AG04449 (cell line): ENCODE measurements at regions of chr1 and their contacts with region 1.

Region 1: DNA sequence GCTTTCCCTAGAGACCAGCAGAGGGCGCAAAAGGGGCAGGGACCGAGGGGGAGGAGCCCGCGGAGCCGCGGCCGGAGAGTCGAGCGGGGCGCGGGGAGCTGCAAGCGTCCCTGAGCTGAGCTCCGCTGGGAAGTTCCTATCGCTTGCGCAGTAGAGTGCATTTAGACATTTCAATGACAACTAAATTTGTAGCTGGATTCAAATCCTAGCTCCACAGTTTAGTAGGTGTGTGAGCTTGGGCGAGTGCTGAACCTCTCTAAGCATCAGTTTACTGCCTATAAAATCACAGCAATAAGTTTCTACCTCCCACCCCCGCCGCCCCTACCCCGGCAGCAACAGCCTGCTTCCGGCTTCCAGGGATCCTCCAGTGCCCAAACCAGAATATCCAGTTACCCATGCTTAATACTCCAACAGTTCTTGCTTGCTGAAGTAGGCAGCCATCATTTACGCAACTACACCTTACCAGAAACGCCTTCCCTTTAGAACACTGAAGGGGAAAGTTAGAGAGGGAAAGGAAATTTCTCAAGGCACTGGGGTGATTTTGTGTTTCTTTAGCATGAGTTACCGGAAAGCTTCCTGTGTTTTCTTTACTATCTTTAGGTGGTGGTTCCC is 9.1 kb downstream of the TLR5 start:
- DNase-seq: no peak
- H3K4me3 ChIP-seq: peak overlapping the region; percentile 46
- CTCF ChIP-seq: peak; percentile 90

Region 2: GRCh38 chr1:223041473-223041872 is 92.5 kb before region 1 on chr1:
- CTCF ChIA-PET with region 1: no interaction called
- POLR2A ChIA-PET with region 1: no interaction called
- DNase-seq: no peak
- H3K4me3 ChIP-seq: no peak overlapping the region
- CTCF ChIP-seq: no peak

Region 3: GRCh38 chr1:223114871-223115270 is 19.1 kb before region 1 on chr1:
- CTCF ChIA-PET with region 1: interaction called, 296 read pairs
- POLR2A ChIA-PET with region 1: no interaction called
- DNase-seq: no peak
- H3K4me3 ChIP-seq: no peak overlapping the region
- CTCF ChIP-seq: no peak

Region 4: DNA sequence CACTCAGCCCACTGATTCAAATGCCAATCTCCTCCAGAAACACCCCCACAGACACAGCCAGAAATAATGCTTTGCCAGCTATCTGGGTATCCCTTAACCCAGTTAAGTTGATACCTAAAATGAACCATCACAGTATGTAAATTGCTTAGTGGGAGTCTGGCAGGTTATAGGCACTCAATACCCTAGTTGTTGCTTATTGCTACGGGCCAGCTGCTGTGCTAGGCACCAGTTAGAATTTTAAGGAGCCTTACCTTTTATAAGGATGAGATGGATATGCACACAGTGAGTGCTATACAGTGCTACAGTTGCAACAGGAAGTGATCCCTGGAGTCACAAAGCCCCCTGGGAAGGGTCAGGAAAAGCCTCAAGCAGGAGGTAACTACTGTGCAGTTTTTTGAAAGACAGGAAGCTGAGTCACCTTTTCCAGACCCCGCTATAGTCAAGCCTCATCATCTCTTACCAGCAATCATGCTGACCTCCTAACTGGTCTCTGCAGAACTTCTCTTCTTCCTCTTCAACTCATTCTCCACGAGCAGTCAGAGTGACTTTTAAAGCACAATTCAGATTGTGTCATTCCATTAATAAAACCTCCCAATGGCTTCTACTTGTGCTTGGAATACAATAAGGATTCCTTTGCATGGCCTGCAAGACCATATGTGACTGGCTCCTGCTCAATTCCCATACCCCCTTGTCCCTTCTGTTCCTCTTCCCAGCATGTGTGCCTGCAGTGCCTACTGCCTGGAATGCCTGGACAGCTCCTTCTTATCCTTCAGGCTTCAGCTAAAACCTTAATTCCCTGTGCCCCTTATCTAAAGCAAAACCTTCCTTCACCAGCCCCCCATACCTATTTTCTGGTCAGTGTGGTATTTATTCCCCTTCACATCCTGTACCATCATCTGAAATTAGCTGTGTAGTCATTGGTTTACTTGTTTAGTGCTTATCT is 19.5 kb after region 1 on chr1:
- CTCF ChIA-PET with region 1: interaction called, 31 read pairs
- POLR2A ChIA-PET with region 1: no interaction called
- DNase-seq: no peak
- H3K4me3 ChIP-seq: no peak overlapping the region
- CTCF ChIP-seq: no peak

Region 5: GRCh38 chr1:223621312-223621734 is 487.4 kb after region 1 on chr1:
- CTCF ChIA-PET with region 1: interaction called, 22 read pairs
- POLR2A ChIA-PET with region 1: no interaction called
- DNase-seq: no peak
- H3K4me3 ChIP-seq: no peak overlapping the region
- CTCF ChIP-seq: no peak

Region 6: DNA sequence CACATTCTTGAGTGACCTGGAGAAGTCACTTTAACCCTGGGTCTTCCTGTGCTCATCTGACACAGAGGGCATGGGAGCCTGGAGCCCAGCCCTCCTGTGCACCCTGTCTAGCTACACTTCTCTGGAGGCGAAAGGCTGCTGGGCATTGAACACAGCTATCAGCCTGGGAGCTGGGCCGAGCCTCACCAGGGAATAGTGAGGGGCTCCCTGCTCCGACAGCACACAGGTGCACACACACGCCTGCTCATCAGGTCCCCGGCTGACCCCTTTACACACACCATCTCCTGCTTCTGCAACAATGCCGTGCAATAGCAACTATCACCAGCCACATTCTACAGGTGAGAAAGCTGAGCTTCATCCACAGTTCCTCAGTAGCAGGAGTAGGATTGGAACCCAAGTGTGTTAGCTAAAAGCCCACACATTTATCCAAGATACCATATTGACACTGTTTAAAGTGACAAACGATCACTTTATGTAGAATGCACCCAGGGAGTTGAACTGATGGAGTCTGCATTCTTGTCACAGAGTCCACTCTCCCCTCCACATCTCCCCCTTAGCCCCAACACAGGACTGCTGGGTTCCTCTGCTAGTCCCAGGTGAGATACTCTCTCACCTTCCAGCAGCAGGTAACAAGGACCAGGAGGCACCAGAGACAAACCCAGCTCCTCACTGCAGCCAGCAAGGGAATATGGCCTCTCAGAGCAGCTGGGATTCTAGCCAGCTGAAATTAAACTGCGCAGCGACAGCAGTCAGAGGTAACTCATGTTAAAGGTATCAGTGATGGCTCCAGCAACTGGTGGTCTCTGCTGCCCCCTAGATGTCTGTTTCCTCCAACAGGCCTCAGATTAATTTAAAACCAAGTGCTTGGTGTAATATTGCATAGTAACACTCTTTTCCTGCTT is 549.9 kb after region 1 on chr1:
- CTCF ChIA-PET with region 1: interaction called, 321 read pairs
- POLR2A ChIA-PET with region 1: no interaction called
- DNase-seq: no peak
- H3K4me3 ChIP-seq: no peak overlapping the region
- CTCF ChIP-seq: peak; percentile 63